Transverse colon (tissue), 4 donors: ENCODE measurements at regions of chr20 and their contacts with region 1.

Region 1: DNA sequence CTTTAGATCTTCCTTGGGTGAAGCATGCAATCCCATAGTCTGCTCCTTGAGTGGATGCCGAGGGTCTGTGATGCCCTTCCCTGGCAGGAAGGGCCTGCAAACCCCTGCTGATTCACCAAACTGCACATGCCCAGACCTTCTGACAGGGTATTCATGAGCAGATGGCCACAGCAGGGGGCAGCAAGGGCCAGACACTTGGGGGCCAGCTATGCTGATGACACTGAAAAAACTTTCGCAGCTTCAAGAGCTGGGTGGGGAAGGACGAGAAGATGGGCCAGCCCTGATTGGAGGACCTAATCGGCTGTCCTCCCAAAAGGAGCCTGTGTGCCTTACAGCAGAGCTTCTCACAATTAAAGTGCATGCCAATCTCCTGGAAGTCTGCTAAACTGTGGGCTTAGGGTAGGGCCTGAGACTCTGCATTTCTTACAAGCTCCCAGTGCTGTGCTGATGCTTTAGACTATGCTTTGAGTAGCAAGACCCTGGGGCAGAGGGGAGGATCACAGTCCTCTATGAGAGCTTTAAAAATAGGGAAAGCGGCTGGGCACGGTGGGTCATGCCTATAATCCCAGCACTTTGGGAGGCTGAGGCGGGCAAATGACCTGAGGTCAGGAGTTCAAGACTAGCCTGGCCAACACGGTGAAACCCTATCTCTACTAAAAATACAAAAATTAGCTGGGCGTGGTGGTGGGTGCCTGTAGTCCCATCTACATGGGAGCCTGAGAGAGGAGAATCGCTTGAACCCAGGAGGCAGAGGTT is 15.2 kb upstream of the GDAP1L1 start:
- DNase-seq: no peak
- H3K4me3 ChIP-seq: no peak overlapping the region
- H3K27ac ChIP-seq: no peak overlapping the region
- H3K4me1 ChIP-seq: no peaks in the 10 kb centered on the region
- H3K27me3 ChIP-seq: no peaks in the 10 kb centered on the region
- CTCF ChIP-seq: no peak
- EP300 ChIP-seq: no peak
- POLR2A ChIP-seq: no peak

Region 2: DNA sequence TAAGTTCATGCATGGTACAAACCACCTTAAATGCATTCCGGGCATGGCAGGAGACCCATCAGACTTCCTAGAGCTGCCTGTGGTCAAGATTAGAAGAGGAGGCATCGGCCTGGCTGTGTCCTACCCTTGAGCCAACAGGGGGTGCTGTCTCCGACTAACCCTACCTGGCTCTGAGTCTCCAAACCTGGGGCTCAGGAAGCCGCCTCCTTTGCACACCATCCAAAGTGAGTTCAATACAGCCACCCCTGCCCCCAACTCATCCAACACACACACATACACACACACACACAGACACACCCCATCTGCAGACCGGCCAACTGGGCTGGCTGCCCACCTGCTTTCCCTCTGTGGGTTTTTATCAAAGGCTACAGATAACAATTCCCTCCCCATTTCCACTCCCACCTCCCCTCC is 121.9 kb before region 1 on chr20:
- in situ Hi-C with region 1: no loop called
- intact Hi-C with region 1: no loop called
- DNase-seq: no peak
- H3K4me3 ChIP-seq: no peak overlapping the region
- H3K27ac ChIP-seq: peak overlapping the region in 1 of 4 donors; percentile 8
- H3K4me1 ChIP-seq: peaks cover 0 to 8% (median 0%) of the 10 kb centered on the region in 4 donors
- H3K27me3 ChIP-seq: peaks cover 10% of the 10 kb centered on the region
- CTCF ChIP-seq: no peak
- EP300 ChIP-seq: no peak
- POLR2A ChIP-seq: no peak

Region 3: GRCh38 chr20:44302026-44302669 is 70.3 kb after region 1 on chr20:
- in situ Hi-C with region 1: loop called in 2 of 4 experiments (anchors 5 to 10 kb)
- intact Hi-C with region 1: no loop called
- DNase-seq: peak; percentile 49
- H3K4me3 ChIP-seq: no peak overlapping the region
- H3K27ac ChIP-seq: peak overlapping the region; percentile 58 to 66 (median 62)
- H3K4me1 ChIP-seq: peaks cover 0 to 17% (median 12%) of the 10 kb centered on the region in 4 donors
- H3K27me3 ChIP-seq: no peaks in the 10 kb centered on the region
- CTCF ChIP-seq: no peak
- EP300 ChIP-seq: no peak
- POLR2A ChIP-seq: no peak